ENCODE measurements at regions of chr10 and their contacts with region 1.

Region 1: GRCh38 chr10:115129752-115130151 is 36.6 kb downstream of the ATRNL1 start:
- DNase-seq: no peak
- H3K4me3 ChIP-seq: no peak overlapping the region
- CTCF ChIP-seq: no peak
- POLR2A ChIP-seq: no peak

Region 2: GRCh38 chr10:114603948-114604347 is 525.8 kb before region 1 on chr10:
- intact Hi-C with region 1: no loop called
- DNase-seq: no peak
- H3K4me3 ChIP-seq: no peak overlapping the region
- CTCF ChIP-seq: no peak
- POLR2A ChIP-seq: no peak

Region 3: DNA sequence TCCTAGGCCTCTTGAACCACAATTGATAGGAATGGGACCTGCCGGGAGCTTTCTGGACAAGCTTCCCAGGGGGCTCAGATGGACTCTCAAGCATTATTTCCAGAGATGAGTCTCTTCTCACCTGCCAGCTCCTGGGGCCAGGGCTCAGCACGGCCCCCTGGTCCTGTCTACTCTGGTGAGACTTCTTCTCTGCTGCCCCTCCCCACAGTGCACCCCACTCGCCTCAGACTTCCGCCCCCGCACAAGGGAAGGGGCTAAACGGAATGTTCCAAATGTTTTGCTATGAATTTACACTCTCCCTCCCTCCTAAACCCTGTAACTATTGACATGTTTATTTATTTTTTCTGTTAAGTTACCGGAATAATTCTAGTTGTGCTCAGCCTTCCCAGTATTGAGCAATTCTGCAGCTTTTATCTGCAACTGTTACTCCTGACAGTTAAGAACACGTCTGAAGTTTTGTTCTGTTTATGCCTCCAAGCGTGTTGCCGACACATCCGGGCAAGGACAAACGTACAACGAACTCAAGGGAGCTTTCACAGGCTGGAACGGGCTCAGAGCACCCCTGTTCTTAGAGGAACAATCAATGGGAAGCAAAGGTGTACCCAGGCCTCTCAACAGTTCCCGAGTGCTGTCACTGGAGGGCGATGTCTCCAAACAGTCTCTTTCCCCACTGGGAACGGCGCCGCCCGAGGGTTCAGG is 253.0 kb before region 1 on chr10:
- intact Hi-C with region 1: loop called (anchors 10 kb)
- DNase-seq: peak; percentile 32 to 92
- H3K4me3 ChIP-seq: no peak overlapping the region
- CTCF ChIP-seq: no peak
- POLR2A ChIP-seq: no peak

Region 4: GRCh38 chr10:115558252-115558651 is 428.5 kb after region 1 on chr10:
- intact Hi-C with region 1: no loop called
- DNase-seq: no peak
- H3K4me3 ChIP-seq: no peak overlapping the region
- CTCF ChIP-seq: no peak
- POLR2A ChIP-seq: no peak

Measured in lower leg skin (tissue), 4 donors.